ENCODE measurements at regions of chr14 and their contacts with region 1.

Region 1: DNA sequence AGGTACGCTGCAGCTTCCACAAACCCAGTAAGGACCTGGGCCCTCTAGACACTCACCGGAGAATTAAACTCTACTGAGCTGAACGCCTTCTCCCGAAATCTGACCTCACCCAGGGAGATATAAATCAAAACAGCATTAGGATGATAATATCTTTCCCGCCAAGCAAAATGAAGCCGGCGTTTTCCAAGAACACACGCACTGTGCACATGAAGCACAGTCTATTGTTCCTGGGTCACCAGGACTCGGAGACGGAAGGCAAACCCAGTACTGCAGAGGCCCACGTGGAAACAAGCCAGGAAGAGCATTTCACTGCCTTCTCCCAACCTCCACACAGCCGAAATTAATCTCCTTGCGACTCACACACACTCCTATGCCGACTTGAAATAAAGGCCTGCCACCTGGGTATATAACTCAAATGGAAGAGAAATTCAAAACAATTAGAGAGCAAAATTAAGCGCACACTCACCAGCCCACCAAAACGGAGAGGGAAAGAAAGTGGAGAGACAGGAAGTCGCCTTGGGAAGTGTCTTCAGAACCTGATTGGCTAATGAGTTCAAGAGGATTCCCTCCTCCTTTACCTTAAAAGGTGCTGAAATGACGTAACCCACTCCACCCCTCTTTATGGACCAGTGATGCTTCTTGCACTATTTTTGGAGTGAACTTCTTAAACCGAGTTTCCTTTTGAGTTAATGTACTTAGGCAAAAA is at the start of gene CCNB1IP1:
- DNase-seq: peak; percentile 71
- H3K4me3 Mint-ChIP-seq: peak within 1 kb of the TSS; percentile 90
- H3K27ac Mint-ChIP-seq: peak within 1 kb of the TSS; percentile 92
- H3K4me1 Mint-ChIP-seq: peaks cover 38% of the 10 kb centered on the region
- H3K27me3 Mint-ChIP-seq: no peaks in the 10 kb centered on the region
- total RNA-seq, gene CCNB1IP1: 93.4 to 98.6 TPM

Region 2: GRCh38 chr14:20305265-20306078 is 27.5 kb before region 1 on chr14 and contains the start of gene TTC5:
- CTCF ChIA-PET with region 1: interaction called, 3 read pairs
- intact Hi-C with region 1: loop called (anchors 2 kb)
- DNase-seq: peak; percentile 92
- H3K4me3 Mint-ChIP-seq: peak within 1 kb of the TSS; percentile 96
- H3K27ac Mint-ChIP-seq: peak within 1 kb of the TSS; percentile 82
- H3K4me1 Mint-ChIP-seq: peaks cover 21% of the 10 kb centered on the region
- H3K27me3 Mint-ChIP-seq: no peaks in the 10 kb centered on the region
- total RNA-seq, gene TTC5: 15.2 to 18.5 TPM

Region 3: GRCh38 chr14:20365928-20366327 is 33.0 kb after region 1 on chr14:
- CTCF ChIA-PET with region 1: interaction called, 5 read pairs
- intact Hi-C with region 1: loop called (anchors 5 kb)
- DNase-seq: no peak
- H3K4me3 Mint-ChIP-seq: no peak overlapping the region
- H3K27ac Mint-ChIP-seq: no peak overlapping the region
- H3K4me1 Mint-ChIP-seq: peaks cover 23% of the 10 kb centered on the region
- H3K27me3 Mint-ChIP-seq: no peaks in the 10 kb centered on the region

Region 4: DNA sequence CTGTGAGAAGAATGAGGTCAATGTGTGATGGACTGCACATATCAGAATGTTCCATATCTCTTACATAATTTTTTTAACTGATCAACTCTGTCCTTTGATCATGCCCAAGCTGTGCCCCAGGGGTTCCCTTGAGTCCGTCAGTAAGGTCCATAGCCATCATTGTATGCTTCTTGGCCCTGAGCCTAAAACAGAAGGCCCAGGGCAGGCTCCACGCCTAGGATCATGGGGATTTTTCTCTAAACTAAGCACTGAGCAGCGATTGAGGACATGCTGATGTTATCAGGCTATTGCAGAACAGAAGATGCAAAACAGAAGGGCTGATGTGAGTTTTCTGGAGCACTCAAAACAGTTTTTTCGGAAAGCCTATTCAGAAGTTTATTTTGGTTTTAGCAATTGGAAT is 207.0 kb after region 1 on chr14:
- CTCF ChIA-PET with region 1: no interaction called
- intact Hi-C with region 1: no loop called
- DNase-seq: no peak
- H3K4me3 Mint-ChIP-seq: no peak overlapping the region
- H3K27ac Mint-ChIP-seq: no peak overlapping the region
- H3K4me1 Mint-ChIP-seq: no peaks in the 10 kb centered on the region
- H3K27me3 Mint-ChIP-seq: no peaks in the 10 kb centered on the region

Measured in activated naive CD4-positive, alpha-beta T cell treated with anti-CD3 and anti-CD28 coated beads for 36 hours (primary cell).